Heart right ventricle (tissue), 16 donors: ENCODE measurements at regions of chr6 and their contacts with region 1.

Region 1: GRCh38 chr6:82270881-82271645 is 23.5 kb upstream of the IBTK start:
- DNase-seq: no peak
- ATAC-seq: peak in 1 of 8 donors; percentile 27
- H3K4me3 ChIP-seq: no peak overlapping the region
- H3K27ac ChIP-seq: no peak overlapping the region
- H3K4me1 ChIP-seq: no peaks in the 10 kb centered on the region
- H3K27me3 ChIP-seq: no peaks in the 10 kb centered on the region
- CTCF ChIP-seq: peak; percentile 31 to 75 (median 64)

Region 2: DNA sequence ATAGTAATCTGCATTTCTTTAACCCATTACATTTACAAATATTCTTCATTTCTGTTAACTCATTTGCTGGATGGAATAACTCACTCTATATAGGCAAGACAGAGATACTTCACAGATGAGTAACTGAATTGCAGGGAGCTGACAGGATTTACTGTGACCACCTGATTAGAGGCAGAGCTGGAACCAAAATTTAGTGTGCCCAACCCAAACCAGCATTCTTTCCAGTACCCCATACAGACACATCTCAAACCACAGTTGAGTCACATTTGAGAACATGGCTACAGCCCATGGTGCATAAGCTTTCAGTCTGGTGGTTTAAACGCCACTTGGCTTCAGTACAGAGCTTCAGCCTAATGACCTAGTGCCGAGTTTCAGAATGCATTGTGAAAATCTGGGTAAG is 380.2 kb before region 1 on chr6:
- intact Hi-C with region 1: no loop called
- DNase-seq: no peak
- ATAC-seq: no peak
- H3K4me3 ChIP-seq: no peak overlapping the region
- H3K27ac ChIP-seq: no peak overlapping the region
- H3K4me1 ChIP-seq: peaks cover 2 to 43% (median 23%) of the 10 kb centered on the region in 9 donors
- H3K27me3 ChIP-seq: no peaks in the 10 kb centered on the region
- CTCF ChIP-seq: no peak

Region 3: GRCh38 chr6:81981812-81982211 is 289.3 kb before region 1 on chr6:
- intact Hi-C with region 1: no loop called
- DNase-seq: no peak
- ATAC-seq: peak in 1 of 8 donors; percentile 67
- H3K4me3 ChIP-seq: no peak overlapping the region
- H3K27ac ChIP-seq: no peak overlapping the region
- H3K4me1 ChIP-seq: peaks cover 0 to 8% (median 0%) of the 10 kb centered on the region in 9 donors
- H3K27me3 ChIP-seq: no peaks in the 10 kb centered on the region
- CTCF ChIP-seq: no peak

Region 4: GRCh38 chr6:82348130-82348529 is 77.1 kb after region 1 on chr6:
- intact Hi-C with region 1: no loop called
- DNase-seq: no peak
- ATAC-seq: no peak
- H3K4me3 ChIP-seq: no peak overlapping the region
- H3K27ac ChIP-seq: no peak overlapping the region
- H3K4me1 ChIP-seq: no peaks in the 10 kb centered on the region
- H3K27me3 ChIP-seq: peaks cover 0 to 13% (median 0%) of the 10 kb centered on the region in 7 donors
- CTCF ChIP-seq: no peak

Region 5: DNA sequence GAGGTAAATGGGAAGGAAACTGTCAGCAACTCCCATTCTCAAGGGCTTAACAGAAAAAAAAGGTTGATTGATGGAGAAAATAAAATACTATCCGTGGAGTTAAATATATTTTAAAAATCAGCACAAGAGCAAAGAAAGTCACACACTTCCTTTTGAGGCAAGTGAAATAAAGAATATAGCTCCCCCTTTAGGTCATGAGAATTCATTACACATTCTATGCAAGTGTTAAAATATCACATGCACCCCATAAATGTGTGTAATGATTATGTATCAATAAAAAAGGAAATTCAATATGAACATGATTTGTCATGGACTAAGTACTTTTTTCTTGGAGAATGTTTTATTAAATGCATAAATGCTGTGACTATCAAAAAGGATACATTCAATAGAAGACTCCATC is 441.8 kb after region 1 on chr6:
- intact Hi-C with region 1: loop called in 2 of 10 experiments (anchors 5 to 10 kb)
- DNase-seq: no peak
- ATAC-seq: no peak
- H3K4me3 ChIP-seq: no peak overlapping the region
- H3K27ac ChIP-seq: no peak overlapping the region
- H3K4me1 ChIP-seq: peaks cover 0 to 13% (median 0%) of the 10 kb centered on the region in 9 donors
- H3K27me3 ChIP-seq: no peaks in the 10 kb centered on the region
- CTCF ChIP-seq: peak in 5 of 9 donors; percentile 14 to 50 (median 34)

Region 6: DNA sequence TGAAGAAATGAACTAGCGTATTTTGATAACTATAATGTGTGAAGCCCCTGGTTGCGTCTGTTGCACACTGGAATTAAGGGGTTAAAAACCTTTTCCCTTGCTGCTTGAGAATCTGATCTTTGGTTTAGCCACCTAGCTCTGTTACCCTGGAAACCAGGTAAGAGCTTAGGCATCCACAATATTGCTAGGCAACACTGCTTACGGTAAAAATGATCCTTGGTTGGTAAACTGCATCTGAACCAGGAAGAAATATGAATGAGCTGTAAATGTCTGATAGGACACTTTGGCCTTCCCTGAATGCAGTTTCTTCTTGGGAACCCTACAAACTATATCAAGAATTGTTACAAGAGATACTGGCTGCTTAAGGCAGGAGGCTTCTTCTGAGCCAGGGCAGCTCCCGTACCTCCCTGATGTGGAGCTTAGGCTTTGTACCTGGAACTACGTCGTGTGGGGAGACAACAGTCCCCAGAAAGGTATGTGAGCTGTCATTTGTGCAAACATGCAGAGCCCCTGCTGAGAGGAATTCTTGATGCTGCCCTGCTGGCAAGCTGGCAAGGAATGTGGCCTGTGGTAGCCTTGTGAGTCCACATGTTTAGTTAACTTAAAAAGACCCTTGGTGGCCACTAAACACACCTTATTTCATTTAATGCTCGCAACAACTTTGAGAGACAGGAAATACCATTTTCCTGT is 776.1 kb after region 1 on chr6:
- intact Hi-C with region 1: loop called in 1 of 10 experiments (anchors 5 kb)
- DNase-seq: no peak
- ATAC-seq: no peak
- H3K4me3 ChIP-seq: no peak overlapping the region
- H3K27ac ChIP-seq: no peak overlapping the region
- H3K4me1 ChIP-seq: no peaks in the 10 kb centered on the region
- H3K27me3 ChIP-seq: no peaks in the 10 kb centered on the region
- CTCF ChIP-seq: no peak